Calu3 (cell line): ENCODE measurements at regions of chr17 and their contacts with region 1.

Region 1: DNA sequence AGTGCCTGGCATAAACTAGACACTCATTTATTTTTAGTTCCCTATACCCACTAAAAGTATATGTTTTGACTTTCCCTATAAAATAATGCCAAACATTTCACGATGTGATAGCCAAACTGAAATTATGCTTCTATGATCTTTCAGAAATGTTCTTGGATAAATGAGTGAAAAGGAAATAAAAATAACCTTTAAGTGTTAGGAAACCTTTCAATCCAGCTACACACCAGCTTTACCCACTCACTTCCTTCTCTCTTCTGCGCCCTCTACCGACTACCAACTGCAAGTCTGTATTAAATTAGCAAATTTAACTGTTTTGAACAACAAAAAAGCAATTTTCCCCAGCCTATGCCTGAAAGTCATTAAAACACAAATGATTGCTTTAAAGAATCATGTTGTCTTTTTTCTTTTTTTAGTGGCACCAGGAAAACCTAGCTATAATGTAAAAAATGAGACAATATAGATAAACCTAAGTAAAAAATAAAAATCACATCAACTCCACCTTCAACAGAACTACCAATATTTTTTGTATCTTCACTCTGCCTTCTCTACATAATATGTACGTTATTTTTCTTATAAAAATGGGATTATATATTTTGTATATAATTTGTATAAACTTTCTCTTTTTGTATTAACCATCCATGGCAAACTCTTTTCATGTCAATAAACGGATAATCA is 13.2 kb upstream of the TMEM100 start:
- DNase-seq: peak; percentile 48
- H3K4me3 Mint-ChIP-seq: no peak overlapping the region
- H3K27ac Mint-ChIP-seq: no peak overlapping the region
- H3K4me1 Mint-ChIP-seq: peaks cover 25% of the 10 kb centered on the region
- H3K27me3 Mint-ChIP-seq: no peaks in the 10 kb centered on the region
- CTCF ChIP-seq: no peak

Region 2: DNA sequence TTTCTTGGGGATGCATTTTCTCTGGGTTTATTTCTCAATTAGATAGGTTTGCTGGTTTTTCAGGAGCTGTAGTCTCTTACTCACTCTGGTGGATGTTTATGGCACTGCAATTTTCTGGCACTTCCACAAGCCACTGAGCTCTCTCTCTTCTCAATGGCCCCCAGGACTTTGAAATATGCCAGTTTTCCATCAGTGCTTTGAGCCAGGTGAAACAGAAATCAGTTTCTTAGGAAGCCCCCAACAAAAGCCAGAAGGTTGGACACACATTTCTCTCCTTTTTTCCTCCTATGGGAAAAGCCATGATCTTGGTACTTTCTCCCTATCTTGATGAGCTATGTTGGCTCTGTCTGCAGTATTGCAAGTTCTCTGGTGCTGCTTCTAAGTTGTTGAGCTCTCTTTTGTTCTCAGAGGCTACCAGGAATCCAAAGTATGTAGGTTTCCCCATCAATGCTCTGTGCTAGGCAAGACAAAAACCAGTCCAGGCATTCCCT is 133.9 kb before region 1 on chr17:
- CTCF ChIA-PET with region 1: no interaction called
- intact Hi-C with region 1: loop called (anchors 10 kb)
- DNase-seq: peak; percentile 44
- H3K4me3 Mint-ChIP-seq: no peak overlapping the region
- H3K27ac Mint-ChIP-seq: no peak overlapping the region
- H3K4me1 Mint-ChIP-seq: no peaks in the 10 kb centered on the region
- H3K27me3 Mint-ChIP-seq: no peaks in the 10 kb centered on the region
- CTCF ChIP-seq: peak; percentile 59

Region 3: GRCh38 chr17:55852734-55853133 is 116.9 kb after region 1 on chr17:
- CTCF ChIA-PET with region 1: no interaction called
- intact Hi-C with region 1: no loop called
- DNase-seq: no peak
- H3K4me3 Mint-ChIP-seq: no peak overlapping the region
- H3K27ac Mint-ChIP-seq: no peak overlapping the region
- H3K4me1 Mint-ChIP-seq: no peaks in the 10 kb centered on the region
- H3K27me3 Mint-ChIP-seq: no peaks in the 10 kb centered on the region
- CTCF ChIP-seq: no peak